ENCODE measurements at regions of chr17 and their contacts with region 1.

Region 1: GRCh38 chr17:42517516-42517915 is 18.5 kb upstream of the NAGLU start:
- DNase-seq: peak; percentile 89
- H3K4me3 Mint-ChIP-seq: no peak overlapping the region
- H3K27ac Mint-ChIP-seq: no peak overlapping the region
- H3K4me1 Mint-ChIP-seq: peaks cover 5% of the 10 kb centered on the region
- H3K27me3 Mint-ChIP-seq: peaks cover 64% of the 10 kb centered on the region

Region 2: DNA sequence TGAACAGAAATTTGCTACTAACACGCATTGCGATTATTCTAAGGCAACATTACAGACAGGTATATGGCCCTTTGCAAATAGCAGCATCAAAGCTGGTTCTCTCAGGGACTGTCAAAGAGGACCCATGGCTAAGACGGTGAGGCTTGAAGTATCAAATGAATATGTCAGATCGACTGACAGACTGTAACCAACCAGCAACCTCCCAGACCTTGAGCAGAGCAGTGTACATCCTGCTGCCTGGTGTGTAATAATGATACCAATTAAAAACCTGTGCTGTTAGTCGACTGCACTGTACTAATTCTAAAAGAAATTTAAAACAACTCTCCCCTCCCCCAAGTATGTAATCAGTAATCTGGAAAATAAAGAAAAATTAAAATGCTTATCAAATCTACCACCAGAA is 287.3 kb before region 1 on chr17:
- CTCF ChIA-PET with region 1: no interaction called
- DNase-seq: no peak
- H3K4me3 Mint-ChIP-seq: no peak overlapping the region
- H3K27ac Mint-ChIP-seq: no peak overlapping the region
- H3K4me1 Mint-ChIP-seq: peaks cover 20% of the 10 kb centered on the region
- H3K27me3 Mint-ChIP-seq: no peaks in the 10 kb centered on the region

Region 3: DNA sequence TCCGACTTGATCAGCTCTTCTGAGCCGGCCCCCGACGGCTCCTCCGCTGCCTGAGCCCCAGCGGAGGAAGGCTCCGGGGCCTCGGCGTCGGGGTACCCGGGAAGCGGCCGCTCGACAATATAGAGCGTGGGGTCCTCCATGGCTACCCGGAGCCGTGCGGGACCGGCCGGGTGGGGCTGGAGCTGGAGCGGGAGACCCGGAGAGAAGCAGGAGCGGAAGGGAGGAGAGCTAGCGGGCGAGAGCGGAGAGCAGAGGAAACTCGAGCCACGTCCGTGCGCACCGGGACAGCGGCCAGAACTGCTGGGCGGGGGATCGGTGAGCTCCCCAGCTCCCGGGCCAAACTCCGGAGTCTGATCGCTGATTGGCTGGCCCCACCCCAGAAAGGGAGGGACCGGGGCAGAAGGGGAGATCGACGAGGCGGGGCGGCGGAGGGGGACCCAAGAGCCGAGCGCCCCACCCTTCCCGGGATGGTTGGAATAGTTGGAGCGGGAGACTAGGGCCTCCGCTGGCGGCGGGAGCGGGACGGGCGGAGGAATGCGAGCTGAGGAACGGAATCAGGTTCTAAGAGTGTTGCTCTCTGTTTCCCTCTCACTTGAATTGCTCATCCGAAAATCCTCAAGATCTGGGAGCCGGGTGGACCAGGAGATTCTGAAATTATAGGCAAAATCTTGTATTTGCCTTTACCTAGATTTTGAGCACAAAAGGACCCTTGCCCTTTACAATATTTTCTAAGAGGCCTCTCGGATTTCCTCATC is 94.4 kb before region 1 on chr17 and contains the start of gene CAVIN1:
- CTCF ChIA-PET with region 1: interaction called, 36 read pairs
- DNase-seq: peak; percentile 42
- H3K4me3 Mint-ChIP-seq: peak within 1 kb of the TSS; percentile 63
- H3K27ac Mint-ChIP-seq: no peak within 1 kb of the TSS
- H3K4me1 Mint-ChIP-seq: peaks cover 17% of the 10 kb centered on the region
- H3K27me3 Mint-ChIP-seq: peaks cover 90% of the 10 kb centered on the region

Region 4: DNA sequence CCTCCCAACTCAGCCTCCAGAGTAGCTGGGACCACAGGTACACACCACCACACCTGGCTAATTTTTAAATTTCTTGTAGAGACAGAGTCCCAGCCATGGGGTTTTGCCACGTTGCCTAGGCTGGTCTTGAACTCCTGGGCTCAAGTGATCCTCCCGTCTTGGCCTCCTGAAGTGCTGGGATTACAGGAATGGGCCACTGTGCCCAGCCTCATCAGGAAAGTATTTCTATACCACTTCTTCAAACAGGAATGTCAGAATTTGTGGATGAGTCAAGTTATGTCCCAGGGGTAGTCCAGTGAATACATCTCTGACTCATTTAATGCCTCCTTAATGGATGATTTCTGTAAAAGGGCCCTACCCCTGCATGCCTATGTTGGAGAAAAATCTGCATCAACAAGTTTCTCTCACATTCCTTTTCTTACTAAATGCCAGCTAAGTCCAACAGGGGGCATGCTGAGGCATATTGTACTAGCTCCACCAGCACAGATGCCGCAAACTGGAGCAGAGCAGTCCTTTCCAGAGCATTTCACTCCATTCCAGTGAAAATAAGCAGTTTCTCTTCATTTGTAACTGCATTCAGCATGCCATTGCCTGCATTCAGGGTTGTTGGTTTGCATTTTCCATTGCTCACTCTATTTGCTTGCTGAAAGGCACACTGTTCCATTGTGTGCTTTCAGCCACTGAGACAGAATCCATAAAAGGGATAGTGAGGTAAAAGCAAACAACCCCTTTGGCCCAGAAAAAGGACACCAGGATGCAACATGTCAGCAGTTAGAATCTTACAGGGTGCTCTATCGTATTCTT is 89.2 kb before region 1 on chr17:
- CTCF ChIA-PET with region 1: interaction called, 76 read pairs
- DNase-seq: peak; percentile 58
- H3K4me3 Mint-ChIP-seq: no peak overlapping the region
- H3K27ac Mint-ChIP-seq: no peak overlapping the region
- H3K4me1 Mint-ChIP-seq: peaks cover 3% of the 10 kb centered on the region
- H3K27me3 Mint-ChIP-seq: peaks cover 86% of the 10 kb centered on the region

Region 5: GRCh38 chr17:42438600-42439567 is 78.6 kb before region 1 on chr17:
- CTCF ChIA-PET with region 1: interaction called, 76 read pairs
- DNase-seq: peak; percentile 66
- H3K4me3 Mint-ChIP-seq: no peak overlapping the region
- H3K27ac Mint-ChIP-seq: no peak overlapping the region
- H3K4me1 Mint-ChIP-seq: peaks cover 8% of the 10 kb centered on the region
- H3K27me3 Mint-ChIP-seq: peaks cover 30% of the 10 kb centered on the region

Region 6: GRCh38 chr17:42531455-42532354 is 14.2 kb after region 1 on chr17:
- CTCF ChIA-PET with region 1: interaction called, 15 read pairs
- DNase-seq: peak; percentile 65
- H3K4me3 Mint-ChIP-seq: peak overlapping the region; percentile 70
- H3K27ac Mint-ChIP-seq: peak overlapping the region; percentile 77
- H3K4me1 Mint-ChIP-seq: peaks cover 54% of the 10 kb centered on the region
- H3K27me3 Mint-ChIP-seq: peaks cover 38% of the 10 kb centered on the region

Measured in activated naive CD4-positive, alpha-beta T cell treated with anti-CD3 and anti-CD28 coated beads, Interleukin-2, amount 10 ng/mL, durations not matched to agents 7 days and 5 days (primary cell).